GM10248 (cell line): ENCODE measurements at regions of chr11 and their contacts with region 1.

Region 1: DNA sequence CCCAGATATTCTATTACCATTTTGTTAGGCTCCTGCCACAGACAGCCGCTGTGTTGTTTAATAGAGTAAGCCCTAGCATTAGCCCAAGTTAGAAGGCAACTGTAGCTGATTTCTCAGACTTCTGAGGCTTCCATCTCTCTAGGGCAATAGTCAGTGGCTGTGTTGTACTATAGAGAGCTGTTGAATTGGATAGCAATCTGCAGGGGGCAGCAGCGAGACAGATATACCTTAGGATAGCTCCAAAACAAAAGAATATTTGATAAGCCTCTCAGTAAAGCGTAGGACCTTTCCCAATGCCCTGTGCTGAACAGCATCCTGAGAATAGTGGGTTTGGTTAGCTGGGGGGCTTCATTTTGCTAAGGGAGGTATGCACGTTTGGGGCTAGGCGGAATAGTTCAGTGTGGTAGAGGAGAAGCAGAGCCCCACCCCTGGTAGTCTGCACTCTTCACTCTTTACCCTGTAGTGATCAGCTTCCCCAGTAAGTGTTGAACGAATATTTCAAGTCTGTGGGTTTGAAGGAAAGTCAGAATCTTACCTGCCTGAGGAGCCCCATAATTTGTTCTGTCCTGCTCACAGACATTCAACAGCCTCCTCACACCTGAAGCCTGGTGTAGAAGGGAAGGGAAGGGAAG is 515.1 kb downstream of the INSC start:
- DNase-seq: no peak
- CTCF ChIP-seq: peak; percentile 21

Region 2: DNA sequence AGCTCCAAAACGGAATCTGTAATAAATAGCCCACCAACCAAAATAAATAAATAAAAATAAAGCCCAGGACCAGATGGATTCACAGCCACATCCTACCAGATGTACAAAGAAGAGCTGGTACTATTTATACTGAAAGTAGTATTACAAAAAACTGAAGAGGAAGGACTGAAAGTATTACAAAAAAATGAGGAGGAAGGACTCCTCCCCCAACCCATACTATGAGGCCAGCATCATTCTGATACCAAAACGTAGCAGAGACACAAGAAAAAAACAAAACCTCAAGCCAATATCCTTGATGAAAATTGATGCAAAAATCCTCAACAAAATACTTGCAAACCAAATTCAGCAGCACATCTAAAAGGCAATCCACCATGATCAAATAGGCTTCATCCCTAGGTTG is 803.2 kb before region 1 on chr11:
- CTCF ChIA-PET with region 1: no interaction called
- POLR2A ChIA-PET with region 1: no interaction called
- DNase-seq: no peak
- CTCF ChIP-seq: no peak

Region 3: DNA sequence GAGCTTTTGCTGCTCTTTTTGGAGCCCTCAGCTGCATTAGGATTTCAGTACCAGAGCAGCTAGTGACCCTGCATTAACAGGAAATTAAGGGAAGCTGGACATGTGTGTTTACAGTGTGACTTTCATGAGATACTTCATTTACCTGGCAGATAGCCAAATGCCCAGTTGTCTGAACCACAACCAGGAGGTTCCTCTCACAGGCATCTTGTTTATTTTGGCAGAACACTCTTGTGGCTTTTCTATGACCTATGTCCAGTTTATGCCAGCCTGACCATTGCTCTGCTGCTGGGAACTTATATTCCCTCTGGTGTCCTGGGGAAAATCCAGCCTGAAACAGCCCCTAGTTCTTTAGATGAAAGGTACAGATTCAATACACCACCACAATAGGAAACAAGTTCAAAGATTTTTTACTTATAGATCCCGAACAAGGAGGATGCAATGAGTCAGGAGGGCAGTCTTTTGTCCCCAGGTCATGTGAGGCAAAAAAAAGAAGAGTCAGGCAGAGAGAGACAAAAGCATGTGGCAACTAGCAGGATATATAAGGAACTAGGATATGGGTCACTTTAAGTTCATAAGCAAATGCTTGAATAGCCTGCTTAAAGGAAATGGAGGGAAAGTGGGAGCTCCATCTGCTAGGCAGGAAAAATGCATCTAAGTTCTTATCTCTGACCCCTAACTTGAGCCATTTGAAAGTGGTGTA is 135.7 kb before region 1 on chr11:
- CTCF ChIA-PET with region 1: no interaction called
- POLR2A ChIA-PET with region 1: no interaction called
- DNase-seq: no peak
- CTCF ChIP-seq: no peak

Region 4: DNA sequence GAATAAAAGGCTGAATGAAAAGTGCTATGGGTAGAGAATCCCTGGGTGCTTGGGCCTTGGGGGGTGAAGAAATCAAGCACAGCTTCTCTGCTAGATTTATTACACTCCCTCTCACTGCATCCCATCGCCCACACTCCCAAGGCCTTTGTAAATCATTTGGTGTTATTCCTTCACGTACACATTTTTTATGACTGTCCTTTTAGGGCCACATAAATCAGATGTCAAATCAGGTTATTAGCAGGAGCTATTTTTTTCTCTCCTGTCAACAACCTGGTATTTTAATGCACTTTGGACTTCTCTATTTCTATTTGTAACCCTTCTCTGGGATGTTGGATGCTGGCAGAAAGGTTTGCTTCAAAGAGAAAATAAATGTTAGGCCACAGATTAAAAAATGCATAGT is 106.3 kb before region 1 on chr11:
- CTCF ChIA-PET with region 1: no interaction called
- POLR2A ChIA-PET with region 1: no interaction called
- DNase-seq: no peak
- CTCF ChIP-seq: no peak

Region 5: GRCh38 chr11:15610881-15611280 is 18.9 kb before region 1 on chr11:
- CTCF ChIA-PET with region 1: interaction called, 19 read pairs
- POLR2A ChIA-PET with region 1: no interaction called
- DNase-seq: no peak
- CTCF ChIP-seq: no peak

Region 6: GRCh38 chr11:15800111-15800800 is 170.4 kb after region 1 on chr11:
- CTCF ChIA-PET with region 1: no interaction called
- POLR2A ChIA-PET with region 1: no interaction called
- DNase-seq: no peak
- CTCF ChIP-seq: no peak